ENCODE measurements at regions of chr3 and their contacts with region 1.

Region 1: GRCh38 chr3:196969660-196970546 is 1.3 kb upstream of the PIGZ start:
- DNase-seq: peak; percentile 27 to 74
- ATAC-seq: peak in 7 of 8 donors; percentile 64 to 89 (median 82)
- H3K4me3 ChIP-seq: peak overlapping the region; percentile 77 to 99 (median 87)
- H3K27ac ChIP-seq: peak overlapping the region in 8 of 10 donors; percentile 77 to 90 (median 86)
- H3K4me1 ChIP-seq: peaks cover 5 to 18% (median 11%) of the 10 kb centered on the region in 9 donors
- H3K27me3 ChIP-seq: no peaks in the 10 kb centered on the region
- CTCF ChIP-seq: peak; percentile 49 to 98 (median 85)

Region 2: DNA sequence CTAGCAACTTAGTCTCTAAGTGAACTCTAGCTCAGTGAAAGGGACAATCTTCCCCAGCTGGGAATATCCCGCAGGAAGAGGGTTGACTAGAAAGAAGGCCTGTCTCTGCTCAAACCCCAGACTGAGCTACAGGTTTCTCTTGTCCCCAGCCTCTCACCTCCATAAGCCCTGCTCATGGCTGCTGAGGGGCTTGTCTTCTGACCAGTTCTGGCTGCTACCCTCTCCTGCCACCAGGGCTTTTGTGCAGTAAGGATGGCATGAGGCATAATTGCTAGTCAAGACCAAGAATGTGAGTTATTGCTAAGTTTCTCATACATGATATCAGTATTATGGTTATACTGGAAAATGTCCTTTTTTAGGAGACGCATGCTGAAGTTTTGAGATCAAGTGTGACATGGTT is 422.8 kb before region 1 on chr3:
- intact Hi-C with region 1: loop called in 1 of 10 experiments (anchors 10 kb)
- DNase-seq: no peak
- ATAC-seq: no peak
- H3K4me3 ChIP-seq: no peak overlapping the region
- H3K27ac ChIP-seq: no peak overlapping the region
- H3K4me1 ChIP-seq: no peaks in the 10 kb centered on the region
- H3K27me3 ChIP-seq: no peaks in the 10 kb centered on the region
- CTCF ChIP-seq: no peak

Region 3: DNA sequence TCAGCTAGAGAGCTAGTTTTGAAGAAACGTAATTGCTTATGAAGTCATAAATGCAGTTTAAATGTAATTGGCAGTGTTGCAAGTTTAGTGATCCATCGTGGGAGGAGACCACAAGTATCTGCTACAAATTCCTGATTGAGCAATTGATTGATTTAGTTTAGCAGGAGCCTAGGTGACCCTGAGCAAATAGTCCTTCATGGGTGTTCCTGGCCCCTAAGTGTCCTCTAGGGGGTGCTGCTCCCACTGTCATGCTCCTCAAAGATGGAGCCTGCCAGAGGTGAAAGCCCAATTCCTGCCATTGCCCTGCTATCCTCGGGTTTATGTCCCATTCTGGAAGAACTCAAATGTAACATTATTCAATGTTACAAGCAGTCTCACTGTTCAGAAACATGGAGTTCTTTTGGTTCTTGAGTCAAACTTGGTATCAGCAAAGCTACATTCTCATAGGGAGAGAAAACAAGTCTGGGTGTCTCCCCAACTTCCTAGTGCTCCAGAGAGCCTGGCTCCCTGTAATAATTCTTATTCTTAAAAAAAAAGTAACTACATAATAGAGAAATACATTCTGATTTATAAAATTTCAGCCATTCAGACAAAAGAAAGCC is 132.0 kb before region 1 on chr3:
- intact Hi-C with region 1: loop called in 6 of 10 experiments (anchors 1 to 10 kb)
- DNase-seq: peak; percentile 39 to 58
- ATAC-seq: peak in 7 of 8 donors; percentile 43 to 81 (median 71)
- H3K4me3 ChIP-seq: no peak overlapping the region
- H3K27ac ChIP-seq: no peak overlapping the region
- H3K4me1 ChIP-seq: no peaks in the 10 kb centered on the region
- H3K27me3 ChIP-seq: no peaks in the 10 kb centered on the region
- CTCF ChIP-seq: peak; percentile 41 to 80 (median 72)

Region 4: GRCh38 chr3:197029511-197030167 is 59.7 kb after region 1 on chr3 and contains the start of gene MELTF:
- intact Hi-C with region 1: no loop called
- DNase-seq: peak in 1 of 2 donors; percentile 68
- ATAC-seq: peak; percentile 30 to 80 (median 60)
- H3K4me3 ChIP-seq: peak within 1 kb of the TSS; percentile 29 to 65 (median 54)
- H3K27ac ChIP-seq: peak within 1 kb of the TSS in 8 of 10 donors; percentile 47 to 82 (median 74)
- H3K4me1 ChIP-seq: peaks cover 0 to 39% (median 23%) of the 10 kb centered on the region in 9 donors
- H3K27me3 ChIP-seq: peaks cover 0 to 24% (median 9%) of the 10 kb centered on the region in 7 donors
- CTCF ChIP-seq: peak; percentile 63 to 93 (median 76)
- total RNA-seq, gene MELTF: 2.5 to 27.5 (median 6.3) TPM

Region 5: GRCh38 chr3:197181741-197182140 is 211.8 kb after region 1 on chr3:
- intact Hi-C with region 1: loop called in 5 of 10 experiments (anchors 5 to 10 kb)
- DNase-seq: peak; percentile 11 to 35
- ATAC-seq: peak in 6 of 8 donors; percentile 38 to 90 (median 64)
- H3K4me3 ChIP-seq: no peak overlapping the region
- H3K27ac ChIP-seq: no peak overlapping the region
- H3K4me1 ChIP-seq: peaks cover 0 to 52% (median 21%) of the 10 kb centered on the region in 9 donors
- H3K27me3 ChIP-seq: no peaks in the 10 kb centered on the region
- CTCF ChIP-seq: no peak

Region 6: DNA sequence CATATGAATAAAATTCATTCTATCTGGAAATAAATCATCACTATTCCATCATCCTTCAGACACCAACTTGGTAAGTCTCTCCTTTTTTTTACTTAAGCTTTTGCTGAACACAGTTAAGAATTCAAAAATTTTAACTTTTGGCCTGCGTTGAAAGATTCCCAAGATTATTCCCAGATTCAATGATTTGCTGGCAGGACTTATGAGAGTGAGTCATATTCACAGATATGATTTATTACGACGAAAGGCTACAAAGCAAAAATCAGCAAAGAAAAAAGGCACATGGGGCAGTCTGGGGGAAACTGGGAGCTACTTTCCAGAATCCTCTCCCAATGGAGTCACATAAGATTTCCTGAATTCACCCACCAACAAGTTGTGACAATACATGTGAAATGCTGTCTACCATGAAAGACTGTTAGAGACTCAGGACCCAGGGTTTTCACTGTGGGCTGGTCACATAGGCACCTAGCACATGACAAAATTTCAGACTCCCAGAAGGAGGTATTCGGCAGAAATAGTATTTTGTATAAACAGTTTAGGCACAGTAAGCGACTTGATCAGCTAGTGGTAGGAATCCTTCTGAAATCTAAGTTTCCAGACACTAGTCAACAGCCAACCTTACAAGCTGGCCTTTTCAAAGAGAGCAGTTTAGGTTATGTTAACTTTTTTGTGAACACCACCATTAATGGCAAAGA is 246.4 kb after region 1 on chr3:
- intact Hi-C with region 1: no loop called
- DNase-seq: no peak
- ATAC-seq: peak in 4 of 8 donors; percentile 22 to 37 (median 24)
- H3K4me3 ChIP-seq: no peak overlapping the region
- H3K27ac ChIP-seq: peak overlapping the region in 2 of 10 donors; percentile 7 to 37
- H3K4me1 ChIP-seq: peaks cover 0 to 36% (median 32%) of the 10 kb centered on the region in 9 donors
- H3K27me3 ChIP-seq: no peaks in the 10 kb centered on the region
- CTCF ChIP-seq: no peak

Region 7: GRCh38 chr3:197692641-197693040 is 722.7 kb after region 1 on chr3:
- intact Hi-C with region 1: no loop called
- DNase-seq: no peak
- ATAC-seq: no peak
- H3K4me3 ChIP-seq: no peak overlapping the region
- H3K27ac ChIP-seq: no peak overlapping the region
- H3K4me1 ChIP-seq: peaks cover 0 to 10% (median 0%) of the 10 kb centered on the region in 9 donors
- H3K27me3 ChIP-seq: no peaks in the 10 kb centered on the region
- CTCF ChIP-seq: no peak